ENCODE measurements at regions of chr11 and their contacts with region 1.

Region 1: GRCh38 chr11:8480858-8481257 is 113.2 kb downstream of the STK33 start:
- DNase-seq: no peak
- ATAC-seq: no peak
- H3K4me3 ChIP-seq: no peak overlapping the region
- H3K4me3 Mint-ChIP-seq: no peak overlapping the region
- H3K27ac ChIP-seq: no peak overlapping the region
- H3K27ac Mint-ChIP-seq: no peak overlapping the region
- H3K4me1 ChIP-seq: no peaks in the 10 kb centered on the region
- H3K4me1 Mint-ChIP-seq: no peaks in the 10 kb centered on the region
- H3K27me3 ChIP-seq: no peaks in the 10 kb centered on the region
- H3K27me3 Mint-ChIP-seq: peaks cover 0 to 4% of the 10 kb centered on the region in 2 donors
- CTCF ChIP-seq: no peak

Region 2: DNA sequence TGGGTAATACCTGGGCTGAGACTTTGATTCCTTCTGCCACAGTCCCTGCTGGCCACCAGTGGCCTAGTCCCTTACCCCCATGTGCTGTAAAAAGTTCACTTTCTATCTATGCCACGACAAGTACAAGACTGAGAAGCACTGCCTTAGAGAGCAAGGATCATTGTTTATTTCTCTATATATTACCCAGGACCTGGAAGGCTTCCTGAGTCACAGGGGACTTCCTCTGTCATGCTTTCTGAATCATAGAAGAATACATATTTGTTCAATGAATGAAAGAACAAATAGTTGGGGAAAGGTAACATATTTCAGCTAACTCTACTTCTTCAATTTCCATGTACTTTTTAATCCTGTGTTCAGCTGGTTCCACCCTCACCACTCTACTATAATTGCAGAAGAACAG is 1234.7 kb before region 1 on chr11:
- intact Hi-C with region 1: loop called (anchors 10 kb)
- DNase-seq: no peak
- ATAC-seq: no peak
- H3K4me3 ChIP-seq: no peak overlapping the region
- H3K4me3 Mint-ChIP-seq: no peak overlapping the region
- H3K27ac ChIP-seq: no peak overlapping the region
- H3K27ac Mint-ChIP-seq: no peak overlapping the region
- H3K4me1 ChIP-seq: no peaks in the 10 kb centered on the region
- H3K4me1 Mint-ChIP-seq: no peaks in the 10 kb centered on the region
- H3K27me3 ChIP-seq: no peaks in the 10 kb centered on the region
- H3K27me3 Mint-ChIP-seq: peaks cover 16 to 31% of the 10 kb centered on the region in 2 donors
- CTCF ChIP-seq: no peak

Region 3: DNA sequence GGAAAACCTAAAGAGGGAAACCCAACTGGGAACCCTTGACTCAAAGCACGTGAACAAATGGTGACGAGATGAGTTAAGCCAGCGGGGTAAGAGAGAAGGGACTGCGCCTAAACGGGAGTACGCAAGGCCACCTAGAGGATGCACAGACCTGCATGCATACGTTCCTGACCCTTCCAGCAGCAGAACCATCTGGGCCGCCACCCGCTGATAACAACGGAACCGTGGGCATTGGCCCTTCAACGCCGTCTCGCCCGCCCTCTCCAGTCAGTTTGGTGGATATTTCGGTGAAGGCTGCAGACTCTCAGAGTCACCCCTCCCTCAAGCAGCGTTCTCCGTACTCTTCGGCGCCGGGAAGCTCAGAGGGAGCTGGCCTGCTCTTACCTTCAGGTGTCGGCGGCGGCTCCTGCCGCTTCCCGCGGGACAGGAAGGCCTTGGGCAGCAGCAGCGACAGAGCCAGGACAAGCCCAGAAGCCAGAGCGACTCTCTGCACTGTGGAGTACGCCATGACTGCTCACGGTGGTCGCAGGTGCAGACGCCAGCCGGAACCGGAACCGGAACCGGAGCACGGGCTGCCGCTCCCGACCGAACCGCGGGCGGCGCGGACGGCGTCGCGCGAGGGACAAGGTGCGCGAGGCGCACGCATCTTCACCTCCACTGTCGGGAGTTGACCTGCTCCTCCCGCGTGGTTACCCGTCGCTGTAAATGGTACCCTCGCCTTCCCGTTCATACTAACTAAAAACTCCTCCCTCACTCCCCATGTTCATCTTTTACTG is 312.2 kb before region 1 on chr11 and contains the start of gene RIC3:
- intact Hi-C with region 1: no loop called
- DNase-seq: peak in 1 of 2 donors; percentile 66
- ATAC-seq: peak in 1 of 3 donors; percentile 46
- H3K4me3 ChIP-seq: peak within 1 kb of the TSS; percentile 55
- H3K4me3 Mint-ChIP-seq: peak within 1 kb of the TSS; percentile 67
- H3K27ac ChIP-seq: no peak within 1 kb of the TSS
- H3K27ac Mint-ChIP-seq: no peak within 1 kb of the TSS
- H3K4me1 ChIP-seq: peaks cover 8% of the 10 kb centered on the region
- H3K4me1 Mint-ChIP-seq: peaks cover 15 to 21% of the 10 kb centered on the region in 2 donors
- H3K27me3 ChIP-seq: peaks cover 23% of the 10 kb centered on the region
- H3K27me3 Mint-ChIP-seq: peaks cover 48 to 53% of the 10 kb centered on the region in 2 donors
- CTCF ChIP-seq: no peak
- total RNA-seq, gene RIC3: 3.5 to 4.7 (median 3.6) TPM

Region 4: GRCh38 chr11:8247312-8247711 is 233.5 kb before region 1 on chr11:
- intact Hi-C with region 1: no loop called
- DNase-seq: no peak
- ATAC-seq: no peak
- H3K4me3 ChIP-seq: no peak overlapping the region
- H3K4me3 Mint-ChIP-seq: no peak overlapping the region
- H3K27ac ChIP-seq: no peak overlapping the region
- H3K27ac Mint-ChIP-seq: no peak overlapping the region
- H3K4me1 ChIP-seq: no peaks in the 10 kb centered on the region
- H3K4me1 Mint-ChIP-seq: no peaks in the 10 kb centered on the region
- H3K27me3 ChIP-seq: no peaks in the 10 kb centered on the region
- H3K27me3 Mint-ChIP-seq: peaks cover 10 to 16% of the 10 kb centered on the region in 2 donors
- CTCF ChIP-seq: no peak

Region 5: GRCh38 chr11:8373521-8374432 is 107.1 kb before region 1 on chr11:
- intact Hi-C with region 1: no loop called
- DNase-seq: no peak
- ATAC-seq: no peak
- H3K4me3 ChIP-seq: no peak overlapping the region
- H3K4me3 Mint-ChIP-seq: no peak overlapping the region
- H3K27ac ChIP-seq: no peak overlapping the region
- H3K27ac Mint-ChIP-seq: no peak overlapping the region
- H3K4me1 ChIP-seq: no peaks in the 10 kb centered on the region
- H3K4me1 Mint-ChIP-seq: no peaks in the 10 kb centered on the region
- H3K27me3 ChIP-seq: peaks cover 3% of the 10 kb centered on the region
- H3K27me3 Mint-ChIP-seq: peaks cover 2 to 7% of the 10 kb centered on the region in 2 donors
- CTCF ChIP-seq: no peak

Region 6: DNA sequence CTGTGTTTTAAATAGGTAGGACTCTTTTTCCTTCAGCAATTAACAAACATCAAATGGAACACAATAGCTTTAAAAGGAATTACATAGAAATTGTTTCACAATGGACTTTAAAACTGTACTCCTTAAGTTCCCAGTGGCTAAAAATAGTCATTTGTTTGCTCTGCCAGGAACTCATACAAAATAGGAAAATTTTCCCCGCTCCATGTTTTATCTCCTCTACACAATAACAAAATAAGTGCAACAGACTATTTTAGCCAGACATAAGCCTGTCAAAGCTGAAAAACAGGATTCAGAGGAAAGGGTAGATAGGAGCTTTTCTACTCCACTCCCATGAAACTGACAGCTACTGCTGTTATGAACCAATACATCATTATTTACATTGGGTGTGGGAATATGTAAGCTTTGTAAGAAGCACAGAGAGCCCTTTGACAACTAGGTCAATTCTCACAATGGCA is 23.1 kb after region 1 on chr11:
- intact Hi-C with region 1: no loop called
- DNase-seq: no peak
- ATAC-seq: no peak
- H3K4me3 ChIP-seq: no peak overlapping the region
- H3K4me3 Mint-ChIP-seq: no peak overlapping the region
- H3K27ac ChIP-seq: no peak overlapping the region
- H3K27ac Mint-ChIP-seq: no peak overlapping the region
- H3K4me1 ChIP-seq: no peaks in the 10 kb centered on the region
- H3K4me1 Mint-ChIP-seq: no peaks in the 10 kb centered on the region
- H3K27me3 ChIP-seq: no peaks in the 10 kb centered on the region
- H3K27me3 Mint-ChIP-seq: peaks cover 0 to 3% of the 10 kb centered on the region in 2 donors
- CTCF ChIP-seq: no peak

Measured in natural killer cell (primary cell).